ENCODE measurements at regions of chr15 and their contacts with region 1.

Region 1: GRCh38 chr15:52227456-52227855 is 36.3 kb upstream of the GNB5 start:
- DNase-seq: no peak
- ATAC-seq: peak; percentile 89

Region 2: DNA sequence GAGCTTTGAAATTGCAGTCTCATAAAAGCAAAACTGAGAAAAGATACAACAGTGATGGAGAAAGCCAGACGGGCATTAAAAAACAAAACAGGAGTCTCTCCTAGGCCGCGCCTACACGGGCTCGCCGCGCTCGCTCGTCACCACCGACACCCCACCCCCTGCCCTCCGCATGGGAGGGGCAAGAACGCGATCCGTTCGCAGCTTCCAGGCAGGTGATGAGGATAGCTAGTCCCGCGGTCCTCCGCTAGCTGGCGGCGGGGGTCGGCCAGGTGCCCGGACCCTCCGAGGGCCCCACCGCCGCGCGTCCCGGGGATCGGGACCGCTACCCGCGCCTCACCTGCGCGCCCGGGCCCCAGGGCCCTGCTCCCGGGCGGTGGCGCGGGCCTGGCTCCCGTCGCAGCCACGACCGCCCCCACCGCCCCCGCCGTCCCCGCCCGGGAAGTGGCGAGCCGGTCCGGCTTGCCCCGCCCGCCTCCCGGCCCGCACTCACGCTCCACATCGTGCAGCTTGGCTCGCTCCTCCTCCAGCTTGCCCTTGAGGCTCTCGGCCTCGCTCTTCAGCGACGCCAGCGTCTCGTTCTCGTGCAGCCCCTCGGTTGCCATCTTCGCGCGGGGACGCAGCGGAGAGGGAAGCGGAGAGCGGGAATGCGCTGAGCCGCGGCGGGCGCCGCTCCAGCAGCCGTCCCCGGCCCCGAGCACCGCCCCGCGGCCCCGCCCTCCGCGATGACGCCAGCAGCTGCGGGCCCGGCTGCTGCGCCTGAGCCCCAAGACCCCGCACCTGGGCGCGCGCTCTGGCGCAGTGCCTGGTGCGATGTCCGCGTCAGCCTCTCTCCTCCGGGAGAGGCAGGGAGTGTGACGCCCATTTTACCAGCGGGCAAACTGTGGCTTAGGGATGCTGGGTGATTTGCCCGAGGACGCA is 47.9 kb before region 1 on chr15:
- intact Hi-C with region 1: loop called (anchors 5 kb)
- DNase-seq: peak; percentile 89
- ATAC-seq: peak; percentile 94